ENCODE measurements at regions of chr7 and their contacts with region 1.

Region 1: GRCh38 chr7:35465791-35466336 is 212.0 kb upstream of the TBX20 start:
- DNase-seq: peak; percentile 90
- ATAC-seq: peak; percentile 92

Region 2: DNA sequence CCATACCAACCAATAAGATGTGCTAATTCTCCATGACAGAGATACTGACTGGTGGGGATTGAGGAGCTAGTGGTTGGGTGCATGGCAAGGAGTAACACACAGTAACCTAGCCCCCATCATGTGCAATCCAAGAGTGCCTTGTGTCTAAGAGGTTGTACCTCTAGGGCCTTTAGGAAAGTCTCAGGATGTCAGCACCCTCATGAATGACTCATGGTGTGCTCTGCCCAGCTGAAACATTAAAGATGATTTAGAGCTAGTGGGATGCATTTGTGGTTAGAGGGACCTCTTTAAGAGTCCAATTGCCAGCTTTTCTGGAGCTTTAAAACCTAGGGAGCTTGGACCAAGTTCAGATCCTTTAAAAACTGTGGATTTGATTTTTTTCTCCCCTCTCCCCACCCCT is 48.0 kb after region 1 on chr7:
- intact Hi-C with region 1: loop called (anchors 5 kb)
- DNase-seq: no peak
- ATAC-seq: no peak

Region 3: GRCh38 chr7:35716038-35716803 is 250.4 kb after region 1 on chr7:
- intact Hi-C with region 1: no loop called
- DNase-seq: peak; percentile 44
- ATAC-seq: peak; percentile 80